ENCODE measurements at regions of chr15 and their contacts with region 1.

Region 1: GRCh38 chr15:55318588-55319494 is at the starts of genes PIGB and PIGBOS1:
- DNase-seq: peak; percentile 86
- H3K4me3 Mint-ChIP-seq: peak within 1 kb of the TSS; percentile 98
- H3K27ac Mint-ChIP-seq: peak within 1 kb of the TSS; percentile 93
- H3K4me1 Mint-ChIP-seq: peaks cover 51% of the 10 kb centered on the region
- H3K27me3 Mint-ChIP-seq: no peaks in the 10 kb centered on the region
- total RNA-seq, gene PIGB: 13.3 to 13.8 TPM
- total RNA-seq, gene PIGBOS1: 7.3 to 9.2 TPM

Region 2: GRCh38 chr15:55434989-55435825 is 116.4 kb after region 1 on chr15:
- CTCF ChIA-PET with region 1: interaction called, 5 read pairs
- intact Hi-C with region 1: loop called (anchors 1 kb)
- DNase-seq: peak; percentile 14
- H3K4me3 Mint-ChIP-seq: no peak overlapping the region
- H3K27ac Mint-ChIP-seq: no peak overlapping the region
- H3K4me1 Mint-ChIP-seq: no peaks in the 10 kb centered on the region
- H3K27me3 Mint-ChIP-seq: no peaks in the 10 kb centered on the region